Caco-2 (cell line): ENCODE measurements at regions of chr2 and their contacts with region 1.

Region 1: GRCh38 chr2:152222975-152223637 is 47.5 kb upstream of the STAM2 start:
- DNase-seq: no peak
- H3K4me3 ChIP-seq: no peak overlapping the region
- H3K4me3 Mint-ChIP-seq: no peak overlapping the region
- H3K27ac Mint-ChIP-seq: no peak overlapping the region
- H3K4me1 ChIP-seq: no peaks in the 10 kb centered on the region
- H3K4me1 Mint-ChIP-seq: no peaks in the 10 kb centered on the region
- H3K27me3 ChIP-seq: no peaks in the 10 kb centered on the region
- H3K27me3 Mint-ChIP-seq: no peaks in the 10 kb centered on the region
- CTCF ChIP-seq: no peak

Region 2: DNA sequence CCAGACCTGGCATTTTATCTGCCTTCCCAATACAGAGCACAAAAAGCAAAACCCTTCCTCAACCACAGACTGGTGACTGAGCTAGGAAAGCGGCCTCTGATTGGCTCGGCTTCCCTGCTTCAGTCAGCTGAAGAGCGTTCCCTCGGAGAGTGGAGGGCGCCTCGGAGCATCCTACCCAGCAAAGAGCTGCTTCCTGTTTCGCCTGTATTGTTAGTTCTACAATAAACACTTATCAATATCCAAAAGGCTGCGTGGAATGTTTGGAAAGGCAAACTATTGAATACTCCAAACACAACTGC is 249.3 kb before region 1 on chr2:
- CTCF ChIA-PET with region 1: no interaction called
- POLR2A ChIA-PET with region 1: no interaction called
- intact Hi-C with region 1: no loop called
- DNase-seq: no peak
- H3K4me3 ChIP-seq: no peak overlapping the region
- H3K4me3 Mint-ChIP-seq: no peak overlapping the region
- H3K27ac Mint-ChIP-seq: no peak overlapping the region
- H3K4me1 ChIP-seq: no peaks in the 10 kb centered on the region
- H3K4me1 Mint-ChIP-seq: no peaks in the 10 kb centered on the region
- H3K27me3 ChIP-seq: no peaks in the 10 kb centered on the region; the same call in 1 of the 2 replicates
- H3K27me3 Mint-ChIP-seq: peaks cover 8% of the 10 kb centered on the region
- CTCF ChIP-seq: no peak

Region 3: GRCh38 chr2:152200562-152201465 is 22.3 kb before region 1 on chr2:
- CTCF ChIA-PET with region 1: no interaction called
- POLR2A ChIA-PET with region 1: no interaction called
- intact Hi-C with region 1: loop called (anchors 2 kb)
- DNase-seq: peak; percentile 68 to 88
- H3K4me3 ChIP-seq: no peak overlapping the region
- H3K4me3 Mint-ChIP-seq: peak overlapping the region; percentile 45
- H3K27ac Mint-ChIP-seq: peak overlapping the region; percentile 66
- H3K4me1 ChIP-seq: peaks cover 20% of the 10 kb centered on the region; the same call in 1 of the 2 replicates
- H3K4me1 Mint-ChIP-seq: peaks cover 31% of the 10 kb centered on the region
- H3K27me3 ChIP-seq: no peaks in the 10 kb centered on the region
- H3K27me3 Mint-ChIP-seq: no peaks in the 10 kb centered on the region
- CTCF ChIP-seq: no peak

Region 4: DNA sequence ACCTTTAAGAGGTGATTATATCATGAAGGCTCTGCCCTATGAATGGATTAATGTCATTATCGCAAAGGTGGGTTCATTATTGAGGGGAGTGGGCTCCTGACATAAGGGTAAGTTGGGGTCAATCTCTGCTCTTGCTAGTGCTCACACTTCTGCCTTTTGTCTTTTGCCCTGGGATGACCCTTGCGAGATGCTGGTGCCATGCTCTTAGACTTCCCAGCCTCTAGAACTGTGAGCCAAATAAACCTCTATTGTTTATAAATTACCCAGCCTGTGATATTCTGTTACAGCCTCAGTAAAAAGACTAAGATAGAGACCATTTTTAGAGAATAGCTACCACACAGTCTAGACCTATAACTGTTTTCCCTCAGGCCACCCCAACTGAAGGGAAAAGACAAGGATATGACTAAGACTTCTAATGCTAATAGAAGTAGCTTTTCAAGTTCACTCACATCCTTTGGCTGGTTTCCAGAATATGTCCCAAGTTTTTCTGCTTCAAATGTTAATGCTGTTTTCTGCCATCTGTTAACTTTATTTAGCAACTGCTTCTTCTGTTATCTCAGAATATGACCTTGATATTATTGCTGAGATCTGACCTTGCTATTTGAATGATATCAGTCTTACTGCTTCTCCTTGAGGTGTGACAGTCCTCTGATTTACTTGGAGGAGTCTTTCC is 17.6 kb after region 1 on chr2:
- CTCF ChIA-PET with region 1: no interaction called
- POLR2A ChIA-PET with region 1: no interaction called
- intact Hi-C with region 1: loop called (anchors 2 kb)
- DNase-seq: no peak
- H3K4me3 ChIP-seq: no peak overlapping the region
- H3K4me3 Mint-ChIP-seq: no peak overlapping the region
- H3K27ac Mint-ChIP-seq: no peak overlapping the region
- H3K4me1 ChIP-seq: peaks cover 19% of the 10 kb centered on the region
- H3K4me1 Mint-ChIP-seq: peaks cover 8% of the 10 kb centered on the region
- H3K27me3 ChIP-seq: no peaks in the 10 kb centered on the region
- H3K27me3 Mint-ChIP-seq: no peaks in the 10 kb centered on the region
- CTCF ChIP-seq: no peak